ENCODE measurements at regions of chr19 and their contacts with region 1.

Region 1: DNA sequence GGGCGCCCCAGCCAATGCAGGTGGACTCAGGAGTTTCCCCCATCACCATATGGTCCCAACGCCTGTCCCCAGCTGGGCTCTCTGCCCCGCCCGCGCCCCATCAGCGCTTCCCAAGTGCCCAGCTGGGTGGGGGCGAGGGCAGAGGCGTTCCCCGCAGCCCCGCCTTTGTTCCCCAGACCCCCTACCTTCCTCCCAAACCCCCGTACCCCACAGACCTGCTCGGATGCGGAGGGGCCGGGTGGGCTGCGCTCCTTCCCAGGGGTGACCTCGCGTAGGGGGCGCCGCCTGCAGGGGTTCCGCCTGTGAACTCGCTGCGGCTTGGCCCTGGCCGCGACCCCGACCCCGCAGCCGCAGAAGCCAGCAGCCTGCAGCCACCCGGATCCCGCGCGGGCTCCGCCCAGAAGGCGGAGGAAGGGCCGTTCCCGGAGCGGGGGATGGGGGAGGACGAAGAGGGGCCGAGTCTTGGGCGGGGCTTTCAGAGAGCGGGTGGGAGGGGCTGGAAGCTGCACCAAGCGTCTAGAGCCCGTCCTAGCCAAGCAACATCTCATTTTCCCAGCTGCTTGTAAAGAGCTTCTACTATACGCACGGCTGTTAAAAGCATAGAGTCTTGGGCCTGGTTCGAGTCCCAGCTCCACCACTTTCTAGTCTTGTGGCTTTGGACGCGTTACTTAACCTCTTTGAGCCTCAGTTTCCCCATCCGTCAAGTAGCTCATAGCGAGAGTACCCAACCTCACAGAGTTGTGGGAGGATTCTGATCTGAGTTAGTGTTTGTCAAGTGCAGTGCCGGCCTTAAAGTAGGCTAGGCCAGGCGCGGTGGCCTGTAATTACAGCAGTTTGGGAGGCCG is at the start of gene RAB3D:
- DNase-seq: peak; percentile 78 to 88
- H3K4me3 ChIP-seq: peak within 1 kb of the TSS; percentile 84
- H3K27ac ChIP-seq: no peak within 1 kb of the TSS
- H3K4me1 ChIP-seq: peaks cover 27% of the 10 kb centered on the region
- H3K27me3 ChIP-seq: no peaks in the 10 kb centered on the region
- CTCF ChIP-seq: no peak
- total RNA-seq, gene RAB3D: 35.0 and 36.5 TPM in 2 replicates

Region 2: GRCh38 chr19:11355160-11356073 is 15.9 kb after region 1 on chr19 and contains the start of gene PLPPR2:
- CTCF ChIA-PET with region 1: no interaction called
- POLR2A ChIA-PET with region 1: no interaction called
- intact Hi-C with region 1: loop called (anchors 1 kb)
- DNase-seq: peak; percentile 79 to 90
- H3K4me3 ChIP-seq: peak within 1 kb of the TSS; percentile 74
- H3K27ac ChIP-seq: no peak within 1 kb of the TSS
- H3K4me1 ChIP-seq: peaks cover 25% of the 10 kb centered on the region
- H3K27me3 ChIP-seq: no peaks in the 10 kb centered on the region
- CTCF ChIP-seq: no peak
- total RNA-seq, gene PLPPR2: 25.2 and 30.4 TPM in 2 replicates

Region 3: DNA sequence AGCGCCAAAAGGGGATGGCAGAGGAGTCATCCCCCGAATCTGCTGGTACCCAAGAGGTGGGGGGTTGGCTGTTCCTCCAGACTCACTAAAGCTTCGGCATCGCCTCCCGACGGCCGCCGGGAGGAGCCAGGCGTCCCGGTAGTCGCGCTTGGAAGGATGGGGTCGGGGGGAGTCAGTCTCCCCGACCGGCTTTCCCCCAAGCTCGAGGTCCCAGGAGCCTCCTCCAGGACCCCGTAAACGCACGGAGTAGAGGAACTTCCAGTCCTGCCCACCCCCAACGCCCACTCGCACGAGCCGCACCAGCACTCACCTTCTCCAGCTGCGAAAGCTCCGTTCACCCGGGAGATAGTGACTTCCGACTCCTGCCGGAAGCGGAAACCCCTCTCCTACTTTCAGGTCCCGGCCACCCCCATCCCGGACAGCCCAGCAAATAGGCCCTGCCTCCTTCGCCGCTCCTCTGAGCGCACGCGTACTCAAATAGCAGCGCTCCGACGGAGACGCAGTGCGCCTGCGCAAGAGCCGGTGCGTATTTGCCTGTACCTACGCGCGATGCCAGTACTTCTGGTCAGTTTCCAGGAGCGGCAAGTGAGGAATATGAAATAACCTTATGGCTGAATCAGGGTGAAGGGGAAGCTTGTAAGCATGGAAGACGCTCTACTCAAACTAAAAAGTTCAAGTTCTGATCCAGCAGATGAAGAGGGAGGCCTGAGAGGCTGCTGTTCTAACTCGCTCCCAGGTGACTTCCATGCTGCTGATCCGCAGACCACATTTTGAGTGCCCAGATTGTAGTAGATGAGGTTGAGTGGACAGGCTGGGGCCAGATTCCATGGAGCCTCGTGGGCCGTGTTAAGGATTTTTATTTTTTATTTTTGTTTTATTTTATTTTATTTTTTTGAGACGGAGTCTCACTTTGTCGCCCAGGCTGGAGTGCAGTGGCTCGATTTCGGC is 219.7 kb after region 1 on chr19 and contains the start of gene ELOF1:
- CTCF ChIA-PET with region 1: no interaction called
- POLR2A ChIA-PET with region 1: no interaction called
- intact Hi-C with region 1: no loop called
- DNase-seq: peak; percentile 97
- H3K4me3 ChIP-seq: peak within 1 kb of the TSS; percentile 97
- H3K27ac ChIP-seq: peak within 1 kb of the TSS; percentile 47; the same call in 1 of the 2 replicates
- H3K4me1 ChIP-seq: peaks cover 11% of the 10 kb centered on the region; the same call in 1 of the 2 replicates
- H3K27me3 ChIP-seq: no peaks in the 10 kb centered on the region
- CTCF ChIP-seq: peak; percentile 48
- total RNA-seq, gene ELOF1: 65.5 and 68.7 TPM in 2 replicates

Region 4: DNA sequence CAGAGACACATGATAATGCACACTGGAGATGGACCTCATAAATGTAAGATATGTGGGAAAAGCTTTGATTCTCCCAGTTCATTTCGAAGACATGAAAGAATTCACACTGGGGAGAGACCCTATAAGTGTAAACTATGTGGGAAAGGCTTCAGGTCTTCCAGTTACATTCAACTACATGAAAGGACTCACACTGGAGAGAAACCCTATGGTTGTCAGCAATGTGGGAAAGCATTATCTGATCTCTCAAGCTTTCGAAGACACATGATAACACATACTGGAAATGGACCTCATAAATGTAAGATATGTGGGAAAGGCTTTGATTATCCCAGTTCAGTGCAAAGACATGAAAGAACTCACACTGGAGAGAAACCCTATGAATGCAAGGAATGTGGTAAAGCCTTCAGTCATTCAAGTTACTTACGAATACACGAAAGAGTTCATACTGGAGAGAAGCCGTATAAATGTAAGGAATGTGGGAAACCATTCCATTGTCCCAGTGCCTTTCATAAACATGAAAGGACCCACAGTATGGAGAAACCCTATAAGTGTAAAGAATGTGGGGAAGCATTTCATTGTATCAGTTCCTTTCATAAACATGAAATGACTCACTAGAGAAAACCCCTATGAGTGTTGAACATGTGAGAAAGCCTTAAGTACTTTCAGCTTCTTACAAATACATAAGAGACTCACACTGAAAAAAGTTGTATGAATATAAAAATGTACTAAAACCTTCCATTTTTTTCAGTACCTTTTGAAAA is 442.0 kb after region 1 on chr19:
- CTCF ChIA-PET with region 1: no interaction called
- POLR2A ChIA-PET with region 1: no interaction called
- intact Hi-C with region 1: no loop called
- DNase-seq: no peak
- H3K4me3 ChIP-seq: no peak overlapping the region
- H3K27ac ChIP-seq: no peak overlapping the region
- H3K4me1 ChIP-seq: 0 out of 2 replicates have a peak, but pooled peaks cover 3% of the 10 kb centered on the region
- H3K27me3 ChIP-seq: no peaks in the 10 kb centered on the region
- CTCF ChIP-seq: no peak